ENCODE measurements at regions of chr10 and their contacts with region 1.

Region 1: GRCh38 chr10:35379226-35380137 is 43.2 kb downstream of the CCNY start:
- DNase-seq: peak; percentile 93
- H3K4me3 ChIP-seq: peak overlapping the region; percentile 60
- H3K27ac ChIP-seq: peak overlapping the region; percentile 90
- H3K4me1 ChIP-seq: peaks cover 57% of the 10 kb centered on the region
- CTCF ChIP-seq: peak; percentile 81

Region 2: DNA sequence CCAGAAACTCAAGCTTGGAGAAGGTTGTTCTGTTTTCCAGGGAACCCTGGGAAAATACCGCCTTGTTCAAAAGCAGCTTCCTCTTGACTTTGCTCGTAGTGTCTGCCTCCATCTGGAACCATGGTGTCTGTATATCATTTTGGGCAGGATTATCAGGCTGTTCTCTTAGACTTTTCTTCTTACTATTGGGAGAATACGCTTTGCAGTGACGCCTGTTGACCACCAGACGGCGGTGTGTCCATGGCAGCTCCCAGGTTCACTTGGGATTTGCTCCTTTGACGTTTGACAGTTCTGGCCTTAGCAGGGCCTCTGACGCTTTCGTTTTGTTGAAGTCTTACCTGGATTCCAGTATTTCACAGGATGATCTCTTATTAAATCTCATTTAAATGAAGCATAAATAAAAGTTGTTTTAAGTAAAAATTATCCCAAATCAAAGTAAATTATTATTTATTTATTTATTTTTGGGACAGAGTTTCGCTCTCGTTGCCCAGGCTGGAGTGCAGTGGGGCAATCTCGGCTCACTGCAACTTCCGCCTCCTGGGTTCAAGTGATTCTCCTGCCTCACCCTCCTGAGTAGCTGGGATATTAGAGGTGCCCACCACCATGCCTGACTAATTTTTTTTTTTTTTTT is 183.9 kb after region 1 on chr10:
- CTCF ChIA-PET with region 1: interaction called, 3 read pairs
- POLR2A ChIA-PET with region 1: interaction called, 4 read pairs
- intact Hi-C with region 1: loop called (anchors 1 kb)
- DNase-seq: peak; percentile 77
- H3K4me3 ChIP-seq: no peak overlapping the region
- H3K27ac ChIP-seq: no peak overlapping the region
- H3K4me1 ChIP-seq: peaks cover 18% of the 10 kb centered on the region
- CTCF ChIP-seq: peak; percentile 100

Region 3: DNA sequence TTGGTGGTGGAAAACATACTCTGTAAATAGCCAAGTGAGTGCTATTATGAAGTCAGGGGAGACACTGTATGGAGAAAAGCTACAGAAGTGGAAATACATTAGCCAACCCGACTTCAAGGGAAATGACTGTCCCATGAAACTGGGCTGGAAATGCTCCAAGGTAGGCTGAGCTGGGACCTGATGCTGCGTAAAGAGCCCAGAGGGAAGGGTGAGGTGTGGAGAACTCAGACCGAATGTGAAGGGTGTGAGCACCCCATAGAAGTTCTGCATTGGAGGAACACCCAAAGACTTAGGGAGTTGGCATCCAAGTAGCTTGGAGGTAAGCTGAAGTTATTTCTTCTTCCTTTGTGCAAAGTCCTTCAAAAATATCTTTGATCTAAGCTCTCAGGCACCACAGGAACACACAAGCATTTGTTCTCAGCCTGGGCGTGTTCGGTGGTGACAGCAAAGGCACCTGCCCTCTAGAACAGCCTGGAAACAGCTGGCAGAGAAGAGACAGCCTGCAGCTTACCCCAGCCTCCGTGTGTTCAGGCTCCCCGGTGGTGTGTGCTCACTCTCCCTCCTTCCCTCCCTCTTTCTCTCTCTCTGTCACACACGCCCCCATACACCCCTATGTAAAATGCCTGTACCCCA is 206.5 kb after region 1 on chr10:
- CTCF ChIA-PET with region 1: no interaction called
- POLR2A ChIA-PET with region 1: no interaction called
- intact Hi-C with region 1: no loop called
- DNase-seq: no peak
- H3K4me3 ChIP-seq: no peak overlapping the region
- H3K27ac ChIP-seq: no peak overlapping the region
- H3K4me1 ChIP-seq: no peaks in the 10 kb centered on the region
- CTCF ChIP-seq: no peak

Measured in OCI-LY7 (cell line).